ENCODE measurements at regions of chr15 and their contacts with region 1.

Region 1: DNA sequence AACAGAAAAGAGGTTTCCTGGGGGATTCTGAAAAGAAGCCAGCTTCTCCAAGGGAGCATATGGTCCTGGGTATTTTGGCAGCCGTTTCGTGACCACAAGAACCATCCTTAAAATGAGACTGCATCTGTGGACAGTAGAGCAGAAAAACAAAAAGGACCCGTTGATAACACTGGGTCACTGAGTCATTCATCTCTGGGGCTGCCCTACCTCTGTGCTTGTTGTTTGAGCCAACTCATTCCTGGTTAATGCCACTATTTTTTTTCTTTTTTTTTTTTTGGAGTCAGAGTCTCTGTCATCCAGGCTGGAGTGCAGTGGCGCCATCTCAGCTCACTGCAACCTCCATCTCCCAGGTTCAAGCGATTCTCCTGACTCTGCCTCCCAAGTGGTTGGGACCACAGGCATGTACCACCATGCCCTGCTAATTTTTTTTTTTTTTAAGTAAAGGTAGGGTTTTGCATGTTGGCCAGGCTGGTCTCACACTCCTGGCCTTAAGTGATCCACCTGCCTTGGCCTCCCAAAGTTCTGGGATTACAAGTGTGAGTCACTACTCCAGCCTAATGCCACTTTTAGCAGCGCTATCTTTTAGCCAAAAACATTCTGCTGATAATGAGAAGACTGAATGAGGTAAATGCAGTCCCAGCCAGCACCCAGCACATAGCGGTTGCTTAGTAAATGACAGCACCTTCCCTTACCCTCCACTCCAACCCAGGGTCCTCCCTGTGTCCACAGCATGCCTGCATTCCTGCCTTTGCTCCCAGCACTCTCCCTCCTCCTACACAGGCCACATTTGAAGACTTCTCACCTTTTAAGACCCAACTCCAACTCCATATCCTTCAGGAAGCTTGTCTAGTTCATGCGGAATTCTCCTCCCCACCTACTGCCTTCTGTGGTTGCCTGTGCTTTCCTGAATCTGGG is 9.1 kb upstream of the ISL2 start:
- DNase-seq: no peak
- ATAC-seq: no peak

Region 2: GRCh38 chr15:76235186-76235826 is 92.1 kb before region 1 on chr15:
- intact Hi-C with region 1: loop called in 1 of 2 experiments (anchors 10 kb)
- DNase-seq: no peak
- ATAC-seq: peak; percentile 80

Region 3: DNA sequence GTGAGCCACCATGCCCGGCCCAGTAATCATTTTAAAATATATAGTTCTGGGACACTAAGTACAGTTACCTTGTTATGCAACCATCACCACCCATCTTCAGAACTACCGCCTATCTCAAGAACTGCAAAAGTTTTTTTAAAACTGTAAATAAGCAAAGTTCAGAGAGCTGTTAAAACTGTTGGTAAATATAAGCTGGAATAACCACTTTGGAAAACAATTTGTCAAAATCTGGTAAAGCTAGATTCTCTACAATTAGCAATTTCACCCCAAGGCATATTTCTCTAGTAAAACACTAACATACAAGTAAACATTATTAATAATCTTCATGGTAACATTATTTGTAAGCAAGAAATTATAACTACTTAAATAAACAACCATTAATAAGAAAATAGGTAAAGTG is 77.7 kb before region 1 on chr15:
- intact Hi-C with region 1: no loop called
- DNase-seq: no peak
- ATAC-seq: no peak

Measured in left colon (tissue), 2 donors.